ENCODE measurements at regions of chr9 and their contacts with region 1.

Region 1: GRCh38 chr9:22037954-22038690 is 29.0 kb upstream of the CDKN2B start:
- DNase-seq: no peak
- H3K4me3 ChIP-seq: no peak overlapping the region
- H3K27ac ChIP-seq: no peak overlapping the region
- H3K4me1 ChIP-seq: peaks cover 0 to 4% (median 0%) of the 10 kb centered on the region in 4 experiments; a peak in 1 of 7 replicates
- H3K27me3 ChIP-seq: no peaks in the 10 kb centered on the region
- CTCF ChIP-seq: no peak; a peak in 1 of 4 replicates
- EP300 ChIP-seq: no peak
- POLR2A ChIP-seq: no peak
- RAD21 ChIP-seq: peak; percentile 35 to 49

Region 2: GRCh38 chr9:21983561-21983935 is 54.6 kb before region 1 on chr9:
- CTCF ChIA-PET with region 1: no interaction called
- POLR2A ChIA-PET with region 1: no interaction called
- DNase-seq: no peak
- H3K4me3 ChIP-seq: no peak overlapping the region
- H3K27ac ChIP-seq: no peak overlapping the region
- H3K4me1 ChIP-seq: no peaks in the 10 kb centered on the region
- H3K27me3 ChIP-seq: peaks cover 17 to 52% (median 29%) of the 10 kb centered on the region in 4 experiments
- CTCF ChIP-seq: no peak
- EP300 ChIP-seq: no peak
- POLR2A ChIP-seq: no peak
- RAD21 ChIP-seq: no peak

Region 3: GRCh38 chr9:22052376-22052945 is 14.3 kb after region 1 on chr9:
- CTCF ChIA-PET with region 1: interaction called, 32 read pairs
- POLR2A ChIA-PET with region 1: no interaction called
- DNase-seq: no peak
- H3K4me3 ChIP-seq: no peak overlapping the region
- H3K27ac ChIP-seq: no peak overlapping the region
- H3K4me1 ChIP-seq: no peaks in the 10 kb centered on the region
- H3K27me3 ChIP-seq: no peaks in the 10 kb centered on the region
- CTCF ChIP-seq: no peak
- EP300 ChIP-seq: no peak
- POLR2A ChIP-seq: no peak
- RAD21 ChIP-seq: no peak

Region 4: GRCh38 chr9:22469928-22470544 is 431.9 kb after region 1 on chr9:
- CTCF ChIA-PET with region 1: no interaction called
- POLR2A ChIA-PET with region 1: no interaction called
- DNase-seq: peak in 1 of 2 experiments; percentile 48
- H3K4me3 ChIP-seq: no peak overlapping the region
- H3K27ac ChIP-seq: no peak overlapping the region
- H3K4me1 ChIP-seq: no peaks in the 10 kb centered on the region
- H3K27me3 ChIP-seq: no peaks in the 10 kb centered on the region
- CTCF ChIP-seq: peak in 2 of 3 experiments; percentile 61 to 62; a peak in 3 of 4 replicates
- EP300 ChIP-seq: no peak
- POLR2A ChIP-seq: no peak
- RAD21 ChIP-seq: peak; percentile 87 to 90

Measured in H1 (cell line).